A549 (cell line): ENCODE measurements at regions of chr2 and their contacts with region 1.

Region 1: DNA sequence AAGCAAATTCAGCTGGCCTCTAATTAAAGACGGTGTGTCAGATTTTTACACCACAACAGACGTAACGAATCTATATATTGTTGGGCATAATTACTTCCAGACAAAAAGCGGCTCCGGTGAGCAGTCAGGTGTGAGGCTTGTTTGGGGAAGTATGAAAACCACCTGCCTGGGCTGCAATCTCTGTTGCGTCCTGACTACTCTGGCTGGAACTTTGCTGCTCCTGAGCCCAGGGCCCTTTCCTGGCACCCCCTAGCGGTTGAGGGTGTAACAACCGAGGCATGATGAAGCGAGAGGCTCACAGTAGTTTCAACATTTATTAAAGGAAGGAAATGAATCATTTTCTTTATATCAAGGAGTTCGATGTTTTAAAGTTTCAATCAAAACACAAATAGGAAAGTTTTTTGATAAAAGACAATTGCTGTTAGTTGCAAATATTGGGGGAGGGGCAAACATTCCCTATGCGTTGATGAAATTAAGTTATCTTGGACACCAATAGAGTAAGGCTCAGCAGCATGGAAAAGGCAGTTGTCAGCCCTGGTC is 10.6 kb upstream of the ITGB6 start:
- DNase-seq: peak; percentile 50 to 86
- ATAC-seq: peak; percentile 54 to 67
- H3K4me3 ChIP-seq: no peak overlapping the region
- H3K27ac ChIP-seq: peak overlapping the region; percentile 97 to 99
- H3K4me1 ChIP-seq: peaks cover 91% of the 10 kb centered on the region
- CTCF ChIP-seq: peak; percentile 87
- EP300 ChIP-seq: no peak
- POLR2A ChIP-seq: no peak
- RAD21 ChIP-seq: peak; percentile 83 to 87

Region 2: DNA sequence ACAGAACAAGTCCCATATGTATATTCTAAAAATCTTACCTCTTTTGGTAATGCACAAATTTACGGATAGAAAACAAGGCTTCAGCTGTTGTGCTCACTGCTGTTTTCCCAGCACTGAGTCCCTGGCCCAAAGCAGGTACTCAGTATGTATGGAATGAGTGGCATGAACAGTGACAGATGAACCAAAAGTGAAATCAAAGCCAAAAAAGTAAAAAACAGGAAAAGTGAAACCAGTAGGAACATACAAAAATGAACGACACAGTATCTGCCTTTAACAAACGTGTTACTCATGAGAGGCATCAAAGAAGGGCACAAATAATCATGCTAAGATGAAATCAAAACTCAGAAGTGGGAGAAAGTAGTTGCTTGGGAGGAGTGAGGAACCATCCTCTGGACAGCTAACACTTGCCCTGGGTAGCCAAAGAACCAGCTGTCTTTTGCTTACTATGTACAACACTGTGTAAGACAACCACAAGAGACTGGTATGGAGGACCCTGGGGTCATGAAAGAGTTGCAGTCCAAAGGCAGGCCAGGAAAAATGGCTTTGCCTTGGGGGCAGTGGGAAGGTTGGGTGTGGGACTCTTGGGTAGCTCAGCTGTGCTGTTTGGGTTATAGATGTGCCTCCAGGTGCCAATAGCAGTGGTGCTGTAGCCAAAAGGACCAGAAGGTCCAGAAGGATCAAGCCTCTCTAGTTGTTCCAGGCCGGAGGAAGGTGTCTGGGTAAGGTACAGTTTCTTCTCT is 108.5 kb before region 1 on chr2:
- CTCF ChIA-PET with region 1: interaction called, 10 read pairs
- POLR2A ChIA-PET with region 1: no interaction called
- DNase-seq: no peak
- ATAC-seq: no peak
- H3K4me3 ChIP-seq: no peak overlapping the region
- H3K27ac ChIP-seq: no peak overlapping the region
- H3K4me1 ChIP-seq: no peaks in the 10 kb centered on the region
- CTCF ChIP-seq: no peak
- EP300 ChIP-seq: no peak
- POLR2A ChIP-seq: no peak
- RAD21 ChIP-seq: no peak

Region 3: DNA sequence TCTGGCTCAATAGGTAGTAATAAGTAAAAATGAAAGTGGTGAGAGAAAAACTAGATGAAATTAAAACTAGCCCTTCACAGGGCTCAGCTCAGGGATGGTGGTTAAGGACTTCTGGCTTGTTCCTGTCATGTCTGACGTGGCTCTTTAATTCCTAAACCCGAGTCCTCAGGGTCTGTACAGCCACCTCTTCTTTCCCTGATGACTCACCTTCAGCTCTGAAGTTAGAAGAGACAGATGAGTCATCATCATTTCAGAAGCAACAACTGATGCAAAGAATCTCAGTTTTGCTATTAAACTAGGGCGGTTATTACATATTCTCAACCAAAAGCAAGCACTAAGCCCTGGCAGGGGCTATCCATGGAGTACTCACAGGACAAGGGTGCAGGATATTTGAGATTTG is 13.4 kb after region 1 on chr2:
- CTCF ChIA-PET with region 1: interaction called, 49 read pairs
- POLR2A ChIA-PET with region 1: interaction called, 4 read pairs
- DNase-seq: peak; percentile 86 to 92
- ATAC-seq: peak; percentile 64 to 73
- H3K4me3 ChIP-seq: no peak overlapping the region
- H3K27ac ChIP-seq: peak overlapping the region; percentile 88 to 97
- H3K4me1 ChIP-seq: peaks cover 95% of the 10 kb centered on the region
- CTCF ChIP-seq: no peak
- EP300 ChIP-seq: peak; percentile 21 to 59; a peak in 2 of 5 replicates
- POLR2A ChIP-seq: no peak
- RAD21 ChIP-seq: peak; percentile 2 to 20; a peak in 2 of 5 replicates

Region 4: GRCh38 chr2:160232905-160233475 is 22.3 kb after region 1 on chr2:
- CTCF ChIA-PET with region 1: interaction called, 26 read pairs
- POLR2A ChIA-PET with region 1: interaction called, 4 read pairs
- DNase-seq: no peak
- ATAC-seq: no peak; a peak in 1 of 6 replicates
- H3K4me3 ChIP-seq: no peak overlapping the region
- H3K27ac ChIP-seq: peak overlapping the region; percentile 88 to 97
- H3K4me1 ChIP-seq: peaks cover 56% of the 10 kb centered on the region
- CTCF ChIP-seq: no peak
- EP300 ChIP-seq: no peak
- POLR2A ChIP-seq: no peak
- RAD21 ChIP-seq: no peak

Region 5: GRCh38 chr2:160241251-160242137 is 30.8 kb after region 1 on chr2:
- CTCF ChIA-PET with region 1: interaction called, 8 read pairs
- POLR2A ChIA-PET with region 1: interaction called, 10 read pairs
- DNase-seq: peak; percentile 72 to 88
- ATAC-seq: peak; percentile 87 to 91
- H3K4me3 ChIP-seq: no peak overlapping the region
- H3K27ac ChIP-seq: peak overlapping the region; percentile 88 to 93
- H3K4me1 ChIP-seq: peaks cover 52% of the 10 kb centered on the region
- CTCF ChIP-seq: no peak
- EP300 ChIP-seq: peak; percentile 56 to 61; a peak in 2 of 5 replicates
- POLR2A ChIP-seq: no peak; the same call in 1 of the 2 replicates
- RAD21 ChIP-seq: peak in 1 of 2 experiments; percentile 31; a peak in 2 of 5 replicates

Region 6: GRCh38 chr2:160252278-160252887 is 41.7 kb after region 1 on chr2:
- CTCF ChIA-PET with region 1: interaction called, 13 read pairs
- POLR2A ChIA-PET with region 1: interaction called, 4 read pairs
- DNase-seq: peak; percentile 56 to 62
- ATAC-seq: peak; percentile 38 to 54; a peak in 3 of 6 replicates
- H3K4me3 ChIP-seq: peak overlapping the region; percentile 34; the same call in 1 of the 3 replicates
- H3K27ac ChIP-seq: peak overlapping the region; percentile 73 to 84
- H3K4me1 ChIP-seq: peaks cover 50% of the 10 kb centered on the region
- CTCF ChIP-seq: peak; percentile 78
- EP300 ChIP-seq: no peak
- POLR2A ChIP-seq: no peak
- RAD21 ChIP-seq: peak; percentile 66 to 71; a peak in 4 of 5 replicates

Region 7: DNA sequence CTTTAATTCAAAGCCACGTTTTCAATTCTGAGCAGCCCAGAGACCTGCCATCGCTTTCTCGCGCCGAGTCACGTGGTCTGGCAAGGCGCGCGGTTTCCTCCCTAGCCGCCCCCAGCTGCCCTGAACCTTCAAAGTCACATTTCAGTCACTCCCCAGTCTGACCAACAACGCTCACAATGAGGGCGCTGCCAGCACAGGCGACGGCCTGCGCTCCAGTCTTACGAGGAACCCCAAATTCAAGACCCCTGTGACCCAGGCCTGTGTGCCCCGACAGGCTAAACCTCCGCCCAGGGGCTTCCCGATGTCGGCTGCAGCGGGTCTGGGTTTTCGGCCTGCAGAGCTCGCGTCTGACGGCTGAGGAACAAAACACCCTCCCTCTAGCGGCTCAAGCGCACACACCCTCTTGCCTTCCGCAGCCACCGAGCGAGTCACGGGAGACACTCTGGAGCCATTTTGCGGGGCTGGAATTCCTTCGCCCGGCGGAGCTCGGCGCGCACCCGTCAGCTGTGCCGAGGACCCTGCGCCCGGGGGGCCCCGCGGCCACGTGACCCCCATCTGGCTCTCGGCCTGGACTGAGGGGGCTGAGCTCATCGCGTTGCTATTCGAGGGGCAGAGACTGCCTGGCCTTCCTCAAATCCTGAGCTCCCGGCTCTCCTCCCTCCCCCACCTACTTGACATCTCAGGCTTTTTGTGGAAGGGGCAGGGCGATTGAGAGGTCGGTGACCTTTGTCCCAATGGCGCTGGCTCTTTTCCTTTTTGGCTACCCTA is 59.3 kb after region 1 on chr2:
- CTCF ChIA-PET with region 1: interaction called, 5 read pairs
- POLR2A ChIA-PET with region 1: interaction called, 10 read pairs
- DNase-seq: peak; percentile 83 to 92
- ATAC-seq: peak; percentile 91
- H3K4me3 ChIP-seq: peak overlapping the region; percentile 39
- H3K27ac ChIP-seq: peak overlapping the region; percentile 94 to 96
- H3K4me1 ChIP-seq: peaks cover 74% of the 10 kb centered on the region
- CTCF ChIP-seq: peak; percentile 43
- EP300 ChIP-seq: peak in 1 of 2 experiments; percentile 51; a peak in 1 of 5 replicates
- POLR2A ChIP-seq: no peak
- RAD21 ChIP-seq: peak; percentile 44 to 73

Region 8: DNA sequence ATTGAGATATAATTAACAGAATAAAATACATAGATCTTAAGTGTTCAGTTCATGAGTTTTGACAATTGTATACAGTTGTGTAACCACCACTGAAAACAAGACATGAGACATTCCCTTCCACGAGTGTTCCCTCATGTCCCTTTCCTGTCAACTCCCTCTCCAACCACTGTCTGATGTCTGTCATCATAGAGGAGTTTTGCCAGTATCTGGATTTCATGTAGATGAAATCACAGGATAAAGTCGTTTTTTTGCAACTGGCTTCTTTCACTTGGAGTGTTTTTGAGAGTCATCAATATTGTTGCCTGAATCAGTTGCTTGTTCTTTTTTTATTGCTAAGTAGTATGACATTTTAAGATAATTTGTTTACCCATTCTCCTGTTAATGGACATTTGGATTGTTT is 230.2 kb after region 1 on chr2:
- CTCF ChIA-PET with region 1: no interaction called
- POLR2A ChIA-PET with region 1: no interaction called
- DNase-seq: no peak
- ATAC-seq: no peak
- H3K4me3 ChIP-seq: no peak overlapping the region
- H3K27ac ChIP-seq: no peak overlapping the region
- H3K4me1 ChIP-seq: no peaks in the 10 kb centered on the region
- CTCF ChIP-seq: no peak
- EP300 ChIP-seq: no peak
- POLR2A ChIP-seq: no peak
- RAD21 ChIP-seq: no peak